ENCODE measurements at regions of chr2 and their contacts with region 1.

Region 1: DNA sequence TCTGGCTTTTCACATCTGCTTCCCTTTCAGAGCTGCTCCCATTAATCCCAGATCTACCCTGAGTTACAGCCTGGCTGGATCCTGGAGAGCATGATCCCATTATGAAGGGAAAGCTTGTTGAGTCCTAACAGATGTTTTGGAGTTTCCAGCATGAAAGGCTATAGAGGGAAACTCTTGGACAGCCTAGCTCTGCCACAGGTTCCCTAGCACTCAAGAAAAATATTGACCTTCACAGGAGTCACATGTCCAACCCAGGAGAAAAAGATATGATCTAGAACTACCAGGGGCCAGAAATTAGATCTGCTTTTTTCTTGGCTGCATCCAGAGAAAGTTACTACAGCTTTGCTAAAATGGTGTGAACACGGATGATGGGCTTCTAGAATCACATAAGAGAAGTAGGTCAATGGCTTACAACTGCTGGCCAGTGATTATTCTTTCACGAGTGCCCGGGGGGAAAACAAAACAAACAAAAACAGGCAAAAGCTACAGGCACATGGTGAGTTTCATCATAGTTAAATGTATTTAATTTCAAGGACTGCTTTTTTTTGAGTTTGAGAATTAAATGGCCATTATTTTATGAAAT is 15.9 kb downstream of the CCDC93 start:
- DNase-seq: no peak
- H3K4me3 ChIP-seq: no peak overlapping the region
- CTCF ChIP-seq: no peak
- POLR2A ChIP-seq: no peak

Region 2: DNA sequence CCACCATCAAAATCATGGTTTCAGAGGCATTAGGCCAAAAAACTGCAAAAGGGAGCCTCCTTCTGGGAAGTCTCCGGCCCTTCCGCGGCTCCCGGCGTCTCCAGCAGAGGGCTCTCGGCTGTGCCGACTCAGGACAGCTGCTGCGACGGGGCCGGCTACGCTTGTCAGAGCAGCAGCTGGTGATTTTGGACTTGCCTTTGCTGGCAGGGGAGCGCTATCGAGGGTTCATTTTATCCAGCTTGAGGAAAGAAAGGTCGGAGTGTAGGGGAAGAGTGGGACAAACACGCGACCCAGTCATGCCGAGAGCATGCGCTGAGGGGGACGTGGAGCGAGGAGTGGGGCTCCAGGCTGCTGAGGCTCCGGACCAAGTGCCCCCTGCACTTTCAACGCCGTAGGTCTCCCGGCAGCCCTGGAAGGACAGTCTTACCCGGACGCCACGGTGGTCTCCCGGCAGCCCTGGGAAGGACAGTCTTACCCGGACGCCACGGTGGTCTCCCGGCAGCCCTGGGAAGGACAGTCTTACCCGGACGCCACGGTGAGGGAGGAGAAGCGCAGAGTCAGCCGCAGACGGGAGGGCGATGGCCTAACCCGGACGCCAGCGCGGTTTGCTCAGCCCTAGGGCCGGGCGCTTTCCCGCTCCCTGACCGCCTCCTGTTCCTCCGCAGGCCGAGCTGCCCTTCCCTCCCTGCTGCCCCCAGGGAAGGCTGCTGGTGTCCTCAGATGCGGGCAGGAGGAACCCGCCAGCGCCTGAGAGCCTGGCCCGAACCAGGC is 161.8 kb before region 1 on chr2:
- intact Hi-C with region 1: loop called (anchors 10 kb)
- DNase-seq: peak; percentile 62 to 96
- H3K4me3 ChIP-seq: no peak overlapping the region
- CTCF ChIP-seq: peak in 1 of 3 donors; percentile 14
- POLR2A ChIP-seq: no peak

Region 3: GRCh38 chr2:117943013-117943672 is 54.8 kb before region 1 on chr2:
- intact Hi-C with region 1: no loop called
- DNase-seq: no peak
- H3K4me3 ChIP-seq: no peak overlapping the region
- CTCF ChIP-seq: no peak
- POLR2A ChIP-seq: no peak

Measured in lower leg skin (tissue), 4 donors.